HCT116 (cell line): ENCODE measurements at regions of chr2 and their contacts with region 1.

Region 1: DNA sequence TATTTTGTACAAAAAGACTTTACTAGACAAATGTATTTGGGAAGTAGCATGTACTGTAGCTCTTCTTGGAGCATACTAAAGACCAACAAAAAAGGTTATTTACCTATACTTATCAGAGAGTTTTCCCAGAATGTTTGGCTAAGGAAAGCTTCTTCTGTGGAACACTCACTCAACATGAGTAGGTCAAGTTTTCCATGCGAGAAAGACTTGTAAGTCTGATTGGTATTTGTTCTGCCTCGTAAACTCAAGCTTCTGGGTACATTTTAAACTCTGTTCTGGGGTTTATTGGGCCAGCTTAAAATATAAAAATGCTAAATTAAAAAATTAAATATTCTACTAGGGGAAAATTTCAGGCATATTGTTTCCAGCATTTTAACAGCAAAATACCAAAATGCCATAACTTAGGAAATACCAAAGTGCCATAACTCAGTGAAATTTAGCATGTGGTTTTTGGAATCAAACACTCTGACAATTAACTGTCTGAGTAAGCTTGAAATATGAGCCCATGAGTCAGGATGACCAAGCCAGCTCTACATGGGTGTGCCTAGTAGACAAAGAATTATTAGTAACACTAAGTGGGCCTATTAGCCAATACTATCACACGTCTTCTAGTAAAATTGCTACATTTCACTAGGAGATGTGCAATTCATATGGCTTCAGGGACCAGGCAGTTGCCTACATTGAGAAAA is 47.3 kb upstream of the SERPINE2 start:
- DNase-seq: peak; percentile 88
- ATAC-seq: peak; percentile 92
- H3K4me3 ChIP-seq: peak overlapping the region in 1 of 2 experiments; percentile 10; a peak in 2 of 4 replicates
- H3K27ac ChIP-seq: peak overlapping the region; percentile 62; the same call in 1 of the 2 replicates
- H3K4me1 ChIP-seq: peaks cover 21 to 34% of the 10 kb centered on the region in 2 experiments
- H3K27me3 ChIP-seq: no peaks in the 10 kb centered on the region
- CTCF ChIP-seq: no peak
- POLR2A ChIP-seq: no peak
- RAD21 ChIP-seq: peak; percentile 20

Region 2: DNA sequence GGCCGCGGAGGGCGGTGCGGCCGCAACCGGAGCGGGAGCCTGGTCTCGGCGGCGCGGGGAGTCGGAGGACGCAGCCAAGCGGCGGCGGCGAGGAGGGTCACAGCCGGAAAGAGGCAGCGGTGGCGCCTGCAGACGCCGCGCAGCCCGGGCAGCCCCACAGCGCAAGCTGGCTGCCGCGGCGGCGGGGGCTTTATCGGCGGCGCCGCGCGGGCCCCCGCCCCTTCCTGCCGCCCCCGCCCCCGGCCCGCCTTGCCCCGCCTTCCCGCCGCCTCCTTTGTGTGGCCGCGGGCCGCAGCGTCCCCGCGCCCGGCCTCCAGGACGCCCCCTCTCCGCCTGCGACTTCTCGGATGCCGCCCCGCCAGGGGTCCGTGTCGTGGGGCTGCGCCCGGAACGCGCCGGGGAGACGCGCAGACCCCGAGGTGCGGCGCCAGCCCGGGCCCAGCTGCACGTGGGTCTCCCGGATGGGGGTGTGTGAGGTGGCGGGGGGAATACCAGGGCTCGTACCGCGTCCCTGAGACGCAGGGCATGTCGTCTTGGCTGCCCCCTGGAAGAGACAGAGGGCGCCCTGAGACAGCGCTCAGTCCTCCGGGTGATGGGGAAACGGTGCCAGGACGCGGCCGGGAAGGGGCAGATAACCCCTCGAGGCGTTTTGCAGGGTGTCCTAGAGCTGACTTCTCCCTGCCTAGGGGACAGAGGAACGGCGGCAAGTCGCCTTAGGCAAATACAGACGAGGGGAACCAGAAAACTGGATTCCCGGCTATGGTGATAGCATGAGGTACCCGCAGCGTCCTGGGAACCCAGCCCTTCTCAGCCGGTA is 47.0 kb before region 1 on chr2 and contains the start of gene SERPINE2:
- CTCF ChIA-PET with region 1: no interaction called
- POLR2A ChIA-PET with region 1: interaction called, 3 read pairs
- RAD21 ChIA-PET with region 1: no interaction called
- intact Hi-C with region 1: loop called (anchors 2 kb)
- DNase-seq: peak; percentile 52
- ATAC-seq: peak; percentile 83
- H3K4me3 ChIP-seq: peak within 1 kb of the TSS; percentile 68 to 72
- H3K27ac ChIP-seq: peak within 1 kb of the TSS; percentile 67; the same call in 1 of the 2 replicates
- H3K4me1 ChIP-seq: peaks cover 7 to 18% of the 10 kb centered on the region in 2 experiments; a peak in 3 of 4 replicates
- H3K27me3 ChIP-seq: no peaks in the 10 kb centered on the region; the same call in 1 of the 2 replicates
- CTCF ChIP-seq: peak; percentile 49 to 90 (median 55)
- POLR2A ChIP-seq: peak; percentile 89
- RAD21 ChIP-seq: peak; percentile 98
- total RNA-seq, gene SERPINE2: 93.3 TPM

Region 3: GRCh38 chr2:224347176-224348051 is 261.0 kb after region 1 on chr2:
- CTCF ChIA-PET with region 1: no interaction called
- POLR2A ChIA-PET with region 1: no interaction called
- RAD21 ChIA-PET with region 1: no interaction called
- intact Hi-C with region 1: no loop called
- DNase-seq: no peak
- ATAC-seq: no peak
- H3K4me3 ChIP-seq: no peak overlapping the region
- H3K27ac ChIP-seq: no peak overlapping the region
- H3K4me1 ChIP-seq: no peaks in the 10 kb centered on the region
- H3K27me3 ChIP-seq: no peaks in the 10 kb centered on the region
- CTCF ChIP-seq: no peak
- POLR2A ChIP-seq: no peak
- RAD21 ChIP-seq: peak; percentile 14; the same call in 1 of the 2 replicates